CD8-positive, alpha-beta T cell (primary cell): ENCODE measurements at regions of chr19 and their contacts with region 1.

Region 1: DNA sequence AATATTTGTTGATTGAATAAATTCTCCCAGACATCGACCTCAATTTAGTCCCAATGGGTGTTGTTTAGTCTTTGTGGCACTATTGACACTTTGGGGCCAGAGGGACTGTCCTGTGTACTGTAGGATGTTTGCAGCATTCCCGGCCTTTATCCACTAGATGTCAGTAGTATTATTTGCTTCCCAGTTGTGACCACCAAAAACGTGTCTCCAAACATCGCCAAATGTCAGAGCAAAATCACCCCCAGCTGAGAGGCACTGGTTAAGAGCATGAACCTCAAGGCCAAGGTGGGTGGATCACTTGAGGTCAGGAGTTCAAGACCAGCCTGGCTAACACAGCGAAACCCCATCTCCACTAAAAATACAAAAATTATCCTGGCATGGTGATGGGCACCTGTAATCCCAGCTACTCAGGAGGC is 15.4 kb downstream of the NLRP12 start:
- DNase-seq: no peak
- ATAC-seq: no peak
- H3K4me3 ChIP-seq: no peak overlapping the region
- H3K4me3 Mint-ChIP-seq: no peak overlapping the region
- H3K27ac ChIP-seq: no peak overlapping the region
- H3K27ac Mint-ChIP-seq: no peak overlapping the region
- H3K4me1 ChIP-seq: no peaks in the 10 kb centered on the region
- H3K4me1 Mint-ChIP-seq: no peaks in the 10 kb centered on the region
- H3K27me3 ChIP-seq: no peaks in the 10 kb centered on the region
- H3K27me3 Mint-ChIP-seq: no peaks in the 10 kb centered on the region
- CTCF ChIP-seq: no peak

Region 2: GRCh38 chr19:53792721-53793433 is 15.8 kb before region 1 on chr19:
- CTCF ChIA-PET with region 1: interaction called, 14 read pairs
- POLR2A ChIA-PET with region 1: no interaction called
- intact Hi-C with region 1: no loop called
- DNase-seq: peak; percentile 46 to 81 (median 68)
- ATAC-seq: peak; percentile 100
- H3K4me3 ChIP-seq: no peak overlapping the region
- H3K4me3 Mint-ChIP-seq: no peak overlapping the region
- H3K27ac ChIP-seq: no peak overlapping the region
- H3K27ac Mint-ChIP-seq: no peak overlapping the region
- H3K4me1 ChIP-seq: no peaks in the 10 kb centered on the region
- H3K4me1 Mint-ChIP-seq: no peaks in the 10 kb centered on the region
- H3K27me3 ChIP-seq: no peaks in the 10 kb centered on the region
- H3K27me3 Mint-ChIP-seq: peaks cover 2% of the 10 kb centered on the region
- CTCF ChIP-seq: peak; percentile 91

Region 3: GRCh38 chr19:53849237-53849676 is 40.5 kb after region 1 on chr19:
- CTCF ChIA-PET with region 1: no interaction called
- POLR2A ChIA-PET with region 1: no interaction called
- intact Hi-C with region 1: no loop called
- DNase-seq: no peak
- ATAC-seq: no peak
- H3K4me3 ChIP-seq: no peak overlapping the region
- H3K4me3 Mint-ChIP-seq: no peak overlapping the region
- H3K27ac ChIP-seq: no peak overlapping the region
- H3K27ac Mint-ChIP-seq: no peak overlapping the region
- H3K4me1 ChIP-seq: no peaks in the 10 kb centered on the region
- H3K4me1 Mint-ChIP-seq: peaks cover 6% of the 10 kb centered on the region
- H3K27me3 ChIP-seq: peaks cover 0 to 3% of the 10 kb centered on the region in 2 experiments
- H3K27me3 Mint-ChIP-seq: peaks cover 33% of the 10 kb centered on the region
- CTCF ChIP-seq: no peak

Region 4: GRCh38 chr19:54096617-54097129 is 288.0 kb after region 1 on chr19:
- CTCF ChIA-PET with region 1: no interaction called
- POLR2A ChIA-PET with region 1: no interaction called
- intact Hi-C with region 1: no loop called
- DNase-seq: peak in 5 of 9 experiments; percentile 16 to 64 (median 48)
- ATAC-seq: peak; percentile 37
- H3K4me3 ChIP-seq: no peak overlapping the region
- H3K4me3 Mint-ChIP-seq: peak overlapping the region; percentile 68
- H3K27ac ChIP-seq: peak overlapping the region in 1 of 2 experiments; percentile 55
- H3K27ac Mint-ChIP-seq: peak overlapping the region; percentile 66
- H3K4me1 ChIP-seq: peaks cover 4% of the 10 kb centered on the region
- H3K4me1 Mint-ChIP-seq: peaks cover 16% of the 10 kb centered on the region
- H3K27me3 ChIP-seq: peaks cover 0 to 11% of the 10 kb centered on the region in 2 experiments
- H3K27me3 Mint-ChIP-seq: peaks cover 16% of the 10 kb centered on the region
- CTCF ChIP-seq: no peak